ENCODE measurements at regions of chr17 and their contacts with region 1.

Region 1: DNA sequence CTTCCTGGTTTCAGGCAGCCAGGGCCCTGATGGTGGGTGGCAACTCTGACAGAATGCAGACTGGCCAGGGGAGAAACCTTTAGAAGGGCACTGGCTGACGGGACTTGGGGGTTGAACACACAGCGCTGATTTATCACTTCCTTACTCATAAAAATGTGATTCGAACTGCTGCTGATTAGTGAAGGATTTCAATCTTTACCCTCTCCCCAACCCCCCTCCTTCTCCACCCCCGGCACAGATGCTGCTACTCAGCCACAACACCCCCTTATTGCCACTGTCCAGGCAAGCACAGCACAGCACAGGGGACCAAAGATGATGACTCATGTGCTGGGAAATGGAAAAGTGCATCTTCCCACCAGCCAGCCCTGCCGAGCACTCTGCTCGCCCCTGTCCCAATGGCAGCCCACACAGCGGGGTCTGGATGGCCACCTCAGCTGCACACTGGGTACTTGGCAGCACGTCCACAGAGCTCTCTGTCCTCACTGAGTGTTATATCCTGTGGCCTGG is 70.1 kb downstream of the SMG6 start:
- DNase-seq: no peak
- ATAC-seq: no peak
- H3K4me3 ChIP-seq: no peak overlapping the region
- H3K27ac ChIP-seq: no peak overlapping the region
- H3K4me1 ChIP-seq: no peaks in the 10 kb centered on the region
- H3K27me3 ChIP-seq: no peaks in the 10 kb centered on the region
- CTCF ChIP-seq: no peak

Region 2: GRCh38 chr17:2029911-2030778 is 203.3 kb before region 1 on chr17 and contains the start of gene DPH1:
- CTCF ChIA-PET with region 1: interaction called, 12 read pairs
- POLR2A ChIA-PET with region 1: no interaction called
- in situ Hi-C with region 1: no loop called
- intact Hi-C with region 1: no loop called
- DNase-seq: no peak
- ATAC-seq: peak; percentile 87
- H3K4me3 ChIP-seq: peak within 1 kb of the TSS; percentile 89 to 97
- H3K27ac ChIP-seq: peak within 1 kb of the TSS; percentile 75
- H3K4me1 ChIP-seq: peaks cover 3% of the 10 kb centered on the region; the same call in 1 of the 2 replicates
- H3K27me3 ChIP-seq: no peaks in the 10 kb centered on the region
- CTCF ChIP-seq: no peak
- total RNA-seq, gene DPH1: 24.3 TPM

Region 3: DNA sequence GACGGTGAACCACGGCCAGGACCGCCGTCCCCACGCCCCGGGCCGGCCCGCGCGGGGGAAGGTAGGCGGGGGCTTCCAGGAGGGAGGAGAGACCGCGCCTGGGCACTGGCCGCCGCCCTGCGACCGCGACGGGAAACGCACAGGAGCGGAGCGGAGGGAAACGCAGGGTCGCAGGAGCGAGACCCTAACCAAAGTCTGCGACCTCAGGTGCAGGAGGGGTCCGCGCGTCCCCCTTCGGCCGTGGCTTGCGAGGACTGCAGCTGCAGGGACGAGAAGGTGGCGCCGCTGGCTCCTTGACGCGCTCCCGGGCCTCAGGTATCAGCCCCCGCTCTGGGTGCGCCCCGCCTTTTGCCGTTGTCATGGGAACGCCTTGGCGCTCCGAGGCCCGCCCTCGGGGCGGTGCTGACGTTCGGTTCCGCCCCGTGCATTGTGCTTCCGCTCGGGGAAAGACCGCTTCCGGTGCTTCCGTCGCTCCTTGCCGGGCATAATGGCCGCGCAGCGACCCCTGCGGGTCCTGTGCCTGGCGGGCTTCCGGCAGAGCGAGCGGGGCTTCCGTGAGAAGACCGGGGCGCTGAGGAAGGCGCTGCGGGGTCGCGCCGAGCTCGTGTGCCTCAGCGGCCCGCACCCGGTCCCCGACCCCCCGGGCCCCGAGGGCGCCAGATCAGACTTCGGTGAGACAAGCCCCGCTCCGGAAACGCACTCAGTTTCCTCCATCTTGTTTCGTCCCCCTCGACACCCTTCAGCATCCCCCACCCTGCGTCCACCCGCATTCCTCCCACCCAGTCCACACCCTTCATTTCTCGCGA is 191.7 kb before region 1 on chr17 and contains the start of gene OVCA2:
- CTCF ChIA-PET with region 1: no interaction called
- POLR2A ChIA-PET with region 1: interaction called, 11 read pairs
- in situ Hi-C with region 1: no loop called
- intact Hi-C with region 1: no loop called
- DNase-seq: peak; percentile 61
- ATAC-seq: peak; percentile 97
- H3K4me3 ChIP-seq: peak within 1 kb of the TSS; percentile 72 to 77
- H3K27ac ChIP-seq: peak within 1 kb of the TSS; percentile 98
- H3K4me1 ChIP-seq: peaks cover 12% of the 10 kb centered on the region
- H3K27me3 ChIP-seq: no peaks in the 10 kb centered on the region
- CTCF ChIP-seq: peak; percentile 71
- total RNA-seq, gene OVCA2: 42.5 TPM

Region 4: DNA sequence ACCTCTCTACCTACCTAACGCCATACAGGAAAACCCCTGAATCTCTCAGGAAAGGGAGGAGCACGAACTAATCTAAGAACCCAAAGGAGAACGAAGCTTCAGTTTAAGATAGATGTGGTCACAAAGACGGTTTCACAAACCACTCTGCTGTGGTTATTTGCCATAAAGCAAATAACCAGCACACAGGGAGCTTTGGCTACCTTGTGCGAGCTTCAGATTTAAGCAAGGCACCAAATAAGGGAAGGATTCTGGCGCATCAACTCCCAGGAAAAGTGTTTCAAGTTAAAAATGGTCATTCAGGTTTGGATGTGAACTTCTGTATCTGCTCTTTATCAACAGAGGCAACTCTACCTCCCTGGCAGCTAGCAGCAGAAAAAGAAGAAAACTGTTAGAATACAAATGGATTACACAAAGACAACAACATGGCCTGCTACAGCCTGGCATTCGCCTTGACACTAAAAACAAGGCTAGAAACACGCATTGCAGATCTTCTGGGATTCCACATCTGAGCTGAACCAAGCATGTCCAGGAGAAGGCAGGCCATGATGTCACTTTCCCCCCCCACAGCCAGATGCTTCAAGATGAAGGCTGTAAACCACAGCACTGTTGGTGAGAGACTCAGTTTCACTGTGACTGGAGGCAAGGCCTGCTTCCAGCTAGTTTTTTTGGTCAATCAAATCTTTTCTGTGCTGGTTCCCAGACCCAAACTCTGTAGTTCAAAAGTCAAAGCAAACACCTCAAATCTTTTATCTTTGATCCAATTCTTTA is 26.5 kb after region 1 on chr17:
- CTCF ChIA-PET with region 1: no interaction called
- POLR2A ChIA-PET with region 1: no interaction called
- in situ Hi-C with region 1: no loop called
- intact Hi-C with region 1: no loop called
- DNase-seq: no peak
- ATAC-seq: no peak
- H3K4me3 ChIP-seq: no peak overlapping the region
- H3K27ac ChIP-seq: no peak overlapping the region
- H3K4me1 ChIP-seq: no peaks in the 10 kb centered on the region
- H3K27me3 ChIP-seq: no peaks in the 10 kb centered on the region
- CTCF ChIP-seq: no peak

Region 5: GRCh38 chr17:2361010-2361760 is 127.7 kb after region 1 on chr17:
- CTCF ChIA-PET with region 1: no interaction called
- POLR2A ChIA-PET with region 1: no interaction called
- in situ Hi-C with region 1: no loop called
- intact Hi-C with region 1: no loop called
- DNase-seq: no peak
- ATAC-seq: no peak
- H3K4me3 ChIP-seq: no peak overlapping the region
- H3K27ac ChIP-seq: no peak overlapping the region
- H3K4me1 ChIP-seq: no peaks in the 10 kb centered on the region
- H3K27me3 ChIP-seq: no peaks in the 10 kb centered on the region
- CTCF ChIP-seq: no peak

Measured in Panc1 (cell line).